ENCODE measurements at regions of chr7 and their contacts with region 1.

Region 1: GRCh38 chr7:144503215-144503614 is 99.7 kb upstream of the NOBOX start:
- DNase-seq: no peak
- H3K4me3 ChIP-seq: no peak overlapping the region
- H3K4me3 Mint-ChIP-seq: no peak overlapping the region
- H3K27ac Mint-ChIP-seq: no peak overlapping the region
- H3K4me1 ChIP-seq: no peaks in the 10 kb centered on the region; the same call in 1 of the 2 replicates
- H3K4me1 Mint-ChIP-seq: peaks cover 9% of the 10 kb centered on the region
- H3K27me3 ChIP-seq: no peaks in the 10 kb centered on the region
- H3K27me3 Mint-ChIP-seq: no peaks in the 10 kb centered on the region
- CTCF ChIP-seq: no peak

Region 2: GRCh38 chr7:144525956-144526355 is 22.7 kb after region 1 on chr7:
- CTCF ChIA-PET with region 1: no interaction called
- POLR2A ChIA-PET with region 1: no interaction called
- intact Hi-C with region 1: loop called (anchors 2 kb)
- DNase-seq: no peak
- H3K4me3 ChIP-seq: no peak overlapping the region
- H3K4me3 Mint-ChIP-seq: no peak overlapping the region
- H3K27ac Mint-ChIP-seq: no peak overlapping the region
- H3K4me1 ChIP-seq: no peaks in the 10 kb centered on the region
- H3K4me1 Mint-ChIP-seq: no peaks in the 10 kb centered on the region
- H3K27me3 ChIP-seq: no peaks in the 10 kb centered on the region
- H3K27me3 Mint-ChIP-seq: no peaks in the 10 kb centered on the region
- CTCF ChIP-seq: no peak

Region 3: DNA sequence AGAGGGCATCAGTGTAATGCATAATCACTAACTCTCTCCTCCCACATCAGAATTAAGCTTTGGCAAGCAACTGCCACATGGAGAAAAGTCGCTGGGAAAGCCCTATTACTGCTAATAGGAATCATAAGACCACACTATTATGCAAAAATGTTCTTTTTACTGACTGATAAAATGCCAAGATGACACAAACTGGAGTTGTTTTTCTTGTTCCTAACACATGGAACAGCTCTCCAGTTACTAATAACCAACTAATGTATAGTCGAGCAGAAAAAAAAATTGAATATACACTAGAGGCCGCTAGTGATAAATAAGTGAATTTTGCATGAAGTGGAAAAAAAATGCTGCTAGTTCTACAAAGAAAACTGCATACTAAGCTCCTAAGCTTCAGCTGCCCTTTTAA is 167.0 kb after region 1 on chr7:
- CTCF ChIA-PET with region 1: no interaction called
- POLR2A ChIA-PET with region 1: no interaction called
- intact Hi-C with region 1: no loop called
- DNase-seq: peak in 1 of 2 experiments; percentile 11
- H3K4me3 ChIP-seq: no peak overlapping the region
- H3K4me3 Mint-ChIP-seq: no peak overlapping the region
- H3K27ac Mint-ChIP-seq: no peak overlapping the region
- H3K4me1 ChIP-seq: no peaks in the 10 kb centered on the region
- H3K4me1 Mint-ChIP-seq: peaks cover 4% of the 10 kb centered on the region
- H3K27me3 ChIP-seq: no peaks in the 10 kb centered on the region
- H3K27me3 Mint-ChIP-seq: no peaks in the 10 kb centered on the region
- CTCF ChIP-seq: peak; percentile 13 to 33

Measured in Caco-2 (cell line).